PC-3 (cell line): ENCODE measurements at regions of chr2 and their contacts with region 1.

Region 1: GRCh38 chr2:10504370-10504993 is 56.4 kb upstream of the ODC1 start:
- DNase-seq: no peak
- ATAC-seq: no peak
- H3K4me3 ChIP-seq: no peak overlapping the region
- H3K27ac ChIP-seq: no peak overlapping the region
- H3K4me1 ChIP-seq: peaks cover 20% of the 10 kb centered on the region
- H3K27me3 ChIP-seq: no peaks in the 10 kb centered on the region
- CTCF ChIP-seq: no peak

Region 2: DNA sequence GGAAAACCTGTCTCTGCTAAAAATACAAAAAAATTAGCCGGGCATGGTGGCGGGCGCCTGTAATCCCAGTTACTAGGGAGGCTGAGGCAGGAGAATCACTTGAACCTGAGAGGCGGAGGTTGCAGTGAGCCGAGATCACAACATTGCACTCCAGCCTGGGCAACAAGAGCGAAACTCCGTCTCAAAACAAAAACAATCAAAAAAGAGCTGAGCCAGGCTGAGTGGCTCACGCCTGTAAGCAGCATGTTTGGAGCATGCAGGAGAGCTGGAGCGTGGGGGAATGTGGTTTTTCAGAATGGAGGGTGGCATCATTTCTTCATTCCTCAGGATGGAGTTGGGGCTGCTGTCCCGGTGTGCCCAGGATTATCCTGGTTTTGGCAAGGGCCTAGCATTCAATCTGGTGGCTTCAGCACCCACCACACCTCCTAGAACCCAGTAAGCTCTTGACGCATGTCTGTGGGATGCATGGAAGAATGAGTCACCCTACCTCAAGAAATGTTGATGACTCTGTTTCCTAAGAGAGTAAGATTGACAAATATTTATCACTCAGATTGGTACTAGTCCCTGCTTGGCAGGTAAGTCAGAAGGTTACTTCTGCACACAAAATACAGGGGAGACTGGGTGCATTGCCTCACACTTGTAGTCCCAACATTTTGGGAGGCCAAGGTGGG is 33.9 kb after region 1 on chr2:
- CTCF ChIA-PET with region 1: no interaction called
- POLR2A ChIA-PET with region 1: interaction called, 11 read pairs
- intact Hi-C with region 1: no loop called
- DNase-seq: peak; percentile 94
- ATAC-seq: peak; percentile 86
- H3K4me3 ChIP-seq: no peak overlapping the region
- H3K27ac ChIP-seq: peak overlapping the region; percentile 77
- H3K4me1 ChIP-seq: peaks cover 30% of the 10 kb centered on the region
- H3K27me3 ChIP-seq: no peaks in the 10 kb centered on the region
- CTCF ChIP-seq: no peak

Region 3: GRCh38 chr2:10557506-10558265 is 53.2 kb after region 1 on chr2:
- CTCF ChIA-PET with region 1: no interaction called
- POLR2A ChIA-PET with region 1: no interaction called
- intact Hi-C with region 1: no loop called
- DNase-seq: no peak
- ATAC-seq: no peak; the same call in 1 of the 2 replicates
- H3K4me3 ChIP-seq: no peak overlapping the region
- H3K27ac ChIP-seq: no peak overlapping the region
- H3K4me1 ChIP-seq: peaks cover 3% of the 10 kb centered on the region; the same call in 1 of the 2 replicates
- H3K27me3 ChIP-seq: no peaks in the 10 kb centered on the region
- CTCF ChIP-seq: 0 out of 2 replicates have a peak, but pooled peaks have one; percentile 10

Region 4: DNA sequence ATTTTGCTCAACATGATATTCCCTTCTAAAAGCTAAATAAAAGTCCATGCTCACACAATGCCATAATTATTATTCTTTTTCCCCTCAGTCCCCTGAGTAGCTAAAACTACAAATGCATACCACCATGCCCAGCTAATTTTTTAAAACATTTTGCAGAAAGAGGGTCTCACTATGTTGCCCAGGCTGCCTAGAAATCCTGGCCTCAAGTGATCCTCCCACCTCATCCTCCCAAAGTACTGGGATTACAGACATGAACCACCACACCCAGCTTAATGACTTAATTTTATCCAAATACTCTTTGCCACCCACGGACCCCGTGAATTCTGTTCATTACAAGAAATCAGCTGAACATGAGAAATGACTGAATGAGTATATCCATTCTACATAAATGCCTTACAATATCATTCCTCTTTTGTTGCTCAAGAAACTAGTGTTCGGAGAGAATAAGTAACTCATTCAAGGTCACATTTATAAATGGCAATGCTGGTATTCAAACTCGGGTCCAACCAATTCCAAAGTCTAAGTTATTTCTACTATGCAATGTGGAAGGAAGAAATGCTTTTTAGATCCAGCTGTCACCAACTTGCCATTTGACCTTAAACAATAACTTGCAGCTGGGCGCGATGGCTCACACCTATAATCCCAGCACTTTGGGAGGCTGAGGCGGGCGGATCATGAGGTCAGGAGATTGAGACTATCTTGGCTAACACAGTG is 125.5 kb after region 1 on chr2:
- CTCF ChIA-PET with region 1: no interaction called
- POLR2A ChIA-PET with region 1: no interaction called
- intact Hi-C with region 1: no loop called
- DNase-seq: no peak
- ATAC-seq: no peak
- H3K4me3 ChIP-seq: no peak overlapping the region
- H3K27ac ChIP-seq: no peak overlapping the region
- H3K4me1 ChIP-seq: no peaks in the 10 kb centered on the region
- H3K27me3 ChIP-seq: no peaks in the 10 kb centered on the region
- CTCF ChIP-seq: no peak